ENCODE measurements at regions of chr10 and their contacts with region 1.

Region 1: DNA sequence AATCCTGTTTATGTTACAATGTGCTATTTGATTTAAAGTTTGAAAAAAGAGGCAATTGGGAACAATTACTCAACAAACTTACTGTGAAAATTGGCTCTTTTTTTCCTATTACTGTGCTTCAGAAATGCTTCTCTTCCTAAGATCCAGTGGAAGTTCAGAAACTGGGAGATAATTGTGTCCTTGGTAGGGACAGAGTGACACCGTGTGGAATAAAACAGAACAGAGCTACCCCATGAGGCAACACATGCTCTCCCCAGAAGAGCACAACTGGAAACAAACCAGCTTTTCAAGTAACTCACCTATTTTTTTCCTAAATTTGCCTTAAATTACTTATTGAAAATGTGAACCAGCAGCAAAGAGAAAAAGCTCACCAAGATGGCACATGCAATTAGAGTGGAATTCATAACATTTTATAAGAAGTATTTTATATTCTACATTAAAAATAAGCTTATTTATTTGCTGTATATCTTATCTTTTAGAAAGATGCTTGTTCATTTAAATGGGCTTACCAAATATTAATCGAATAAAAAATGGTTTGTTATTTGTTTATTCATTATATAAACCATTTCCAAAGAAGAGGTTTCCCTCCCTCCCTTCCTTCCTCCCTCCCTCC is 346.1 kb upstream of the ANKRD30A start:
- DNase-seq: peak; percentile 87
- H3K4me3 ChIP-seq: no peak overlapping the region
- H3K27ac ChIP-seq: no peak overlapping the region
- H3K4me1 ChIP-seq: no peaks in the 10 kb centered on the region
- H3K27me3 ChIP-seq: no peaks in the 10 kb centered on the region
- CTCF ChIP-seq: peak; percentile 57 to 64
- POLR2A ChIP-seq: no peak

Region 2: DNA sequence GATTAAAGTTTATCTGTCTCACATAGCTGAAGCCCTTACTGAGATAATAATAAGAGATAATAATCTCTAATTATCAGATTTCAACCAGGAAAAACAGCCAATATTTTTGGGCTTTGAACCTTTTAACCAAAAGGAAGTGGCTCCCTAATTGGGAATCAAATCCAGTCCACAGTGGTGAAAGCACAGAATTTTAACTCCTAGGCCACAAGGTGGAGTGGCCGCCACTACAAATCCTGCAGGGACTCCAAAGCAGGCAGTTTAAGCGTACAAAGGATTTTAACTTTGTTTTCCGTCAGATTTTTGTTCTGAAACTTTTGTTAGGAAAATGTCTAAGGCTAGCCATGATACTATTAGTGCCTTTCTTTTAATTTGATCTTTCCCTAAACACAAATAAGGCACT is 1542.6 kb before region 1 on chr10:
- CTCF ChIA-PET with region 1: interaction called, 5 read pairs
- POLR2A ChIA-PET with region 1: no interaction called
- dilution Hi-C with region 1: no loop called
- intact Hi-C with region 1: loop called (anchors 1 kb)
- DNase-seq: peak; percentile 26
- H3K4me3 ChIP-seq: no peak overlapping the region
- H3K27ac ChIP-seq: no peak overlapping the region
- H3K4me1 ChIP-seq: no peaks in the 10 kb centered on the region
- H3K27me3 ChIP-seq: no peaks in the 10 kb centered on the region
- CTCF ChIP-seq: peak; percentile 12 to 35
- POLR2A ChIP-seq: no peak

Region 3: DNA sequence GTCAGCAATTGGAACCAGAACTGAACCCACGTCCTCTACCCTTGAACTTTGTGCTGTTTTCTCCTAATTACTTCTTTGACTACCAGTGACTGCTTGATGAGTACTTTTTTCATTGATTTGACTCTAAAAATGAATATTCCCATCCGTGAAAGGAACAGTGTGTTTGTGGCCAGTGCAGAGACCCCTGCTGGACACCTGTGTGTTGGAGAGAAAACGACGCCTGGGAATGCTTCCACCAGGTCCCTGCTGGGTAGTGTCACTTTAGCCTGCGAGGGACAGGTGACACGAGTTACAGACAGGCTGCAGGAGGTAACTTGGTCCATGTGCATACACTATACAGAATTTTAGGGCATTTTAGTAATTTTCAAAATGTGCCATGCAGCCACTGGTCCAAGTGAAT is 1181.0 kb before region 1 on chr10:
- CTCF ChIA-PET with region 1: interaction called, 19 read pairs
- POLR2A ChIA-PET with region 1: no interaction called
- dilution Hi-C with region 1: no loop called
- intact Hi-C with region 1: no loop called
- DNase-seq: peak; percentile 12
- H3K4me3 ChIP-seq: no peak overlapping the region
- H3K27ac ChIP-seq: no peak overlapping the region
- H3K4me1 ChIP-seq: no peaks in the 10 kb centered on the region
- H3K27me3 ChIP-seq: peaks cover 0 to 8% of the 10 kb centered on the region in 2 experiments
- CTCF ChIP-seq: peak; percentile 22 to 41
- POLR2A ChIP-seq: no peak

Region 4: GRCh38 chr10:35916791-35917190 is 862.5 kb before region 1 on chr10:
- CTCF ChIA-PET with region 1: interaction called, 15 read pairs
- POLR2A ChIA-PET with region 1: no interaction called
- dilution Hi-C with region 1: no loop called
- intact Hi-C with region 1: no loop called
- DNase-seq: no peak
- H3K4me3 ChIP-seq: no peak overlapping the region
- H3K27ac ChIP-seq: no peak overlapping the region
- H3K4me1 ChIP-seq: peaks cover 20% of the 10 kb centered on the region
- H3K27me3 ChIP-seq: no peaks in the 10 kb centered on the region
- CTCF ChIP-seq: peak in 1 of 2 donors; percentile 20
- POLR2A ChIP-seq: no peak

Region 5: GRCh38 chr10:36666451-36666850 is 112.9 kb before region 1 on chr10:
- CTCF ChIA-PET with region 1: no interaction called
- POLR2A ChIA-PET with region 1: no interaction called
- dilution Hi-C with region 1: no loop called
- intact Hi-C with region 1: no loop called
- DNase-seq: no peak
- H3K4me3 ChIP-seq: no peak overlapping the region
- H3K27ac ChIP-seq: no peak overlapping the region
- H3K4me1 ChIP-seq: peaks cover 4% of the 10 kb centered on the region
- H3K27me3 ChIP-seq: no peaks in the 10 kb centered on the region
- CTCF ChIP-seq: no peak
- POLR2A ChIP-seq: no peak

Region 6: GRCh38 chr10:36725581-36726520 is 53.5 kb before region 1 on chr10:
- CTCF ChIA-PET with region 1: interaction called, 12 read pairs
- POLR2A ChIA-PET with region 1: no interaction called
- dilution Hi-C with region 1: no loop called
- intact Hi-C with region 1: no loop called
- DNase-seq: peak; percentile 66
- H3K4me3 ChIP-seq: no peak overlapping the region
- H3K27ac ChIP-seq: no peak overlapping the region
- H3K4me1 ChIP-seq: no peaks in the 10 kb centered on the region
- H3K27me3 ChIP-seq: peaks cover 0 to 3% of the 10 kb centered on the region in 2 experiments
- CTCF ChIP-seq: peak; percentile 7 to 37
- POLR2A ChIP-seq: no peak